Activated T-helper 1 cell treated with anti-CD3 and anti-CD28 coated beads, Interleukin-12 subunit alpha, Interleukin-12 subunit beta, Interleukin-2, Interleukin-4 antibody, amounts not matched to agents 30 ng/mL and 10 ng/mL and 1 ng/mL, durations not matched to agents 14 hours and 24 hours and 36 hours (primary cell): ENCODE measurements at regions of chr15 and their contacts with region 1.

Region 1: DNA sequence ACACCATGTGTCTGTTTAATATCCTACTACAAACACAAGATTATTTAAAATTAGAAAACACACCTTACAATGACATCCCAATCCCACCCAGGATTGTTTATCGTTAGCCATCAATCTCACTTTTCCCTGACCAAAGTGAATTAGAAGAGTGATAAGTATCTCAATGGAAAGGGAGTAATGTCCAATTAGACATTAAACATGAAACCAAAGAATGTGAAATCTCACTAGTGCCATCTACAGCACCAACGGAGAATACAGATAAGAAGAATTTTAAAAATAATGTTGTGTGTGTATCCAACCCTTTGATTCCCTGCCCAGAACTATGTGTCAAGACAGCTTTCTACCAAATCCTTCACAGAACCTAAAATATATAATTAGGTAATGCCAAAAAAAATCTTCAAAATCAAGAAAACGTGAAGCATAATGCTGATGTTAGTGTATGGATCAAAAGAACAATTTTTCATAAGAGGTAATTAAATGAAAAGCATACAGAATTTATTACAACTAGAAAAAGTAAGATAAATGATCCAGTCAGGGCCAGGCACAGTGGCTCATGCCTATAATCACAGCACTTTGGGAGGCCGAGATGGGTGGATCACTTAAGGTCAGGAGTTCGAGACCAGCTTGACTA is 64.2 kb downstream of the SCAPER start:
- DNase-seq: no peak
- H3K4me3 Mint-ChIP-seq: no peak overlapping the region
- H3K27ac Mint-ChIP-seq: no peak overlapping the region
- H3K4me1 Mint-ChIP-seq: peaks cover 9% of the 10 kb centered on the region
- H3K27me3 Mint-ChIP-seq: no peaks in the 10 kb centered on the region

Region 2: GRCh38 chr15:76235186-76235826 is 605.6 kb before region 1 on chr15:
- intact Hi-C with region 1: loop called (anchors 2 kb)
- DNase-seq: no peak
- H3K4me3 Mint-ChIP-seq: no peak overlapping the region
- H3K27ac Mint-ChIP-seq: no peak overlapping the region
- H3K4me1 Mint-ChIP-seq: no peaks in the 10 kb centered on the region
- H3K27me3 Mint-ChIP-seq: no peaks in the 10 kb centered on the region

Region 3: GRCh38 chr15:76642671-76643070 is 198.3 kb before region 1 on chr15:
- intact Hi-C with region 1: loop called (anchors 2 kb)
- DNase-seq: no peak
- H3K4me3 Mint-ChIP-seq: no peak overlapping the region
- H3K27ac Mint-ChIP-seq: no peak overlapping the region
- H3K4me1 Mint-ChIP-seq: no peaks in the 10 kb centered on the region
- H3K27me3 Mint-ChIP-seq: no peaks in the 10 kb centered on the region

Region 4: GRCh38 chr15:77419836-77420609 is 579.1 kb after region 1 on chr15 and contains the start of gene PEAK1:
- intact Hi-C with region 1: no loop called
- DNase-seq: peak; percentile 98
- H3K4me3 Mint-ChIP-seq: peak within 1 kb of the TSS; percentile 99
- H3K27ac Mint-ChIP-seq: peak within 1 kb of the TSS; percentile 98
- H3K4me1 Mint-ChIP-seq: peaks cover 60% of the 10 kb centered on the region
- H3K27me3 Mint-ChIP-seq: peaks cover 4% of the 10 kb centered on the region
- total RNA-seq, gene PEAK1: 24.3 and 27.0 TPM in 2 replicates